GM18951 (cell line): ENCODE measurements at regions of chr12 and their contacts with region 1.

Region 1: DNA sequence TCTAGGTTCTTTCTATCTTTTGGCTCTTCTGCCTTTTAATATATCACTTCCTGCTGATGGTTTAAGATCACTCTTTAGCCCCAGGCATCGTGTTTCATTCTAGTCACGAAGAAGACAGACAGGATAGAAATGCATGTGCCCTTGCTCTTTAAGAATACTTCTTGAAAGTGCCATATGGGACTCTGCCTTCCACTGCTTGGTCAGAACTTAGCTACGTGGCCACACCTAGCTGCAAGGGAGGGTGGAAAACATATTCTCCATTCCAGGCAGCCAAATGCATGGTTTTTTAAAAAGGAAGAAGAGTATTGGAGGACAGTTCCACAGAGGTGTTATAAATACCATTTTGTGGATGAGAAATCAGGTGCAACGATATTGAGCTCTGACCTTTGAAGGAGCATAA is 143.3 kb downstream of the KLRB1 start:
- POLR2A ChIP-seq: no peak

Region 2: DNA sequence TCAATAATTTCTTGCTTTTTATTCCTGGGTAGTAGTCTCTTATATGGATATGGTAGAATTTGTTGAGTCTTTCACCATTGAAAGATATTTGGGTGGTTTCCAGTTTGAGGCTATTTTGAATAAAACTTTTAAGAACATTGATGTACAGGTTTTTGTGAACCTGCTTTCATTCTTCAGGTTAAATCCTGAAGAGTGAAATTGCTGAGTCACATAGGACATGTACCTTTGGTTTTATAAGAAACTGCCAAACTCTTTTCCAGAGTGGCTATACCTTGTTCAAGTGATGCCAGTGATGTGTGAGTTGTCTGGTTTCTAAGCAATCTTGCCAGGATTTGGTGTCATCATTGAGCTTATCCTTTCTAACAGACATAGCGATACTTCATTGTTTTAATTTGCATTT is 71.6 kb before region 1 on chr12:
- in situ Hi-C with region 1: no loop called
- POLR2A ChIP-seq: no peak

Region 3: GRCh38 chr12:9615420-9616136 is 151.2 kb after region 1 on chr12:
- in situ Hi-C with region 1: loop called (anchors 25 kb)
- POLR2A ChIP-seq: no peak